Thyroid gland (tissue), 4 donors: ENCODE measurements at regions of chr1 and their contacts with region 1.

Region 1: GRCh38 chr1:206635080-206635977 is at the start of gene DYRK3:
- DNase-seq: peak; percentile 96
- H3K4me3 ChIP-seq: peak within 1 kb of the TSS; percentile 31 to 86 (median 61)
- H3K27ac ChIP-seq: peak within 1 kb of the TSS in 2 of 3 donors; percentile 75 to 83
- H3K4me1 ChIP-seq: peaks cover 20% of the 10 kb centered on the region in 2 donors
- H3K27me3 ChIP-seq: no peaks in the 10 kb centered on the region
- CTCF ChIP-seq: peak in 2 of 6 experiments; percentile 9 to 27
- POLR2A ChIP-seq: peak; percentile 81 to 98
- total RNA-seq, gene DYRK3: 14.5 to 21.2 (median 15.9) TPM

Region 2: DNA sequence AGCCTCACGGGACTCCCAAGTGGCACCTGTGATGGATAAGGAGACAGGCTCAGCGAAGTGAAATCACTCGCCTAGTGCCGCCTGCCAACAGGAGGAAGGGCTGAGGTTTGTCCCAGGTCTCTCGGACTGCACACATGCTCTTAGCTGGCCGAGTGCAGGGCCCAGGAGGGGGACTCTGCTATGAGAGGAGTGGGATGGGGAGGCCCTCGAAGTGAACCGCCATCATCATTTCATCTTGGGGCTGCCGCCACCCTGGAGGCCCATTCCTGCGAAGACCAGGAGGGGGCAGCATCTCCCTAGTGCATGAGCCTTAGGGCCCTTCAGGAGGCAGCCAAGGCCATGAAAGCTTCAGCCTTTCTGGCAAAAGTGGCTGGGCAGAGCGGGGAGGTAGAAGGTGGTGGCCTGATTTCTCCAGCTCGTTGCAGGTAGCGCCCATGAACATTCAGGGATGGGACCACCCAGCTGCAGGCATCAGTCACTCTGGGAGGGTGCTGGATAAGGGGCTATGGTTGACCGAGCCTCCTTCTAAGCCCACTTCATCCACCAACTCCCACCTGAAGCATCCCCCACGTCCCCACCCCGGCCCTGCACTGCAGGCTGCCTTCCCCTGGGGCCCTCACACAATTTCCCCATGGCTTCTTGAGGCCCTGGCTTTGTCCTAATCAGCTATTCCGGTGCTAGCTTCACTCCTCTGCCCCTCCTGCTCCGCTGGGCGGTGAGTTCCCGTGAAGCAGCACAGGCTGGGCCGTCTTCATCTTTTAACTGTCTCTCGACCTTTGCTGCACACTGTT is 145.2 kb before region 1 on chr1:
- intact Hi-C with region 1: no loop called
- DNase-seq: peak; percentile 83 to 84
- H3K4me3 ChIP-seq: no peak overlapping the region
- H3K27ac ChIP-seq: peak overlapping the region in 1 of 3 donors; percentile 46
- H3K4me1 ChIP-seq: peaks cover 6% of the 10 kb centered on the region in 2 donors
- H3K27me3 ChIP-seq: no peaks in the 10 kb centered on the region
- CTCF ChIP-seq: peak; percentile 75 to 98 (median 96)
- POLR2A ChIP-seq: no peak

Region 3: DNA sequence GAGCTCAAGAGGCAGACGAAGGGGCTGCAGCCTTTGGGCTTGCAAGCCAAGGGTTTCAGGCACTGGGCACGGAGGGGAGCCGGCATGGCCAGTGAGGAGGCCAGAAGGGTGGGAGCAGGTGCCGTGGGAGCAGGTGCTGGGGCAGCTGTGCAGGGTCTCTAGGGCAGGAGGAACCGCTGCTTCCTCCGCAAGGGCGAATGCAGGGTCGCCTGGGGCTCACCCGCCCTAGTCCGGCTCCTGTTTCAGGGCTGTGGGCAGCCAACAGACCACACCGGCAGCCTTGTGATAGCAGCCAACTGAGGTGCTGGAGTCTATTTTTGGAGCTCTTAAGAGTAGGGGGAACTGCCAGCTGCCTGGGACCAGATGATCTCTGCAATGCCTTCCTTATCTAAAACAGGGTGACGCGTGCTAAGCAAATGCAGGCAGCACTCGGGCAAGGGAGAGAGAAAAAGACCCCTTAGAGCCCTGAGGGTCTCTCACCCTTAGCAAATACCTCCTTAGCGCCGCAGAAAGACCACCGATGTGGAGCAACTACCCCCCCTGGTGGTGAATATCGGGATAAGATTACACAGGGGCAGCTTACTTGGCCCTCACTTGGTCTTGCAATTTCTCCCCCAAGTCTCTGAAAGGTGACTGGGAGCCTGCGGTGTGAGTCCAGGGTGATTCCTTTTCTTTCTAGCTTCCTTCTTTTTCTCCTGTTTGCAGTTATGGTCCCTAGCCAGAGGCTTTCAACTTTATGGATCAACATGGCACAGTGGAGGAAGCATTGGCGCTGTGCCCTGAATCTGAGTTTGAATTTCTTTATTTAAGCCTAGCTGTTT is 28.7 kb after region 1 on chr1:
- intact Hi-C with region 1: loop called (anchors 2 kb)
- DNase-seq: peak; percentile 73 to 78
- H3K4me3 ChIP-seq: no peak overlapping the region
- H3K27ac ChIP-seq: no peak overlapping the region
- H3K4me1 ChIP-seq: peaks cover 8 to 11% of the 10 kb centered on the region in 2 donors
- H3K27me3 ChIP-seq: no peaks in the 10 kb centered on the region
- CTCF ChIP-seq: peak; percentile 67 to 97 (median 86)
- POLR2A ChIP-seq: no peak